ENCODE measurements at regions of chr4 and their contacts with region 1.

Region 1: GRCh38 chr4:15649914-15650545 is 5.1 kb downstream of the FBXL5 start:
- DNase-seq: peak; percentile 56
- H3K4me3 Mint-ChIP-seq: peak overlapping the region; percentile 3
- H3K27ac Mint-ChIP-seq: peak overlapping the region; percentile 57
- H3K4me1 Mint-ChIP-seq: peaks cover 50% of the 10 kb centered on the region
- H3K27me3 Mint-ChIP-seq: no peaks in the 10 kb centered on the region

Region 2: GRCh38 chr4:15479089-15479912 is 170.7 kb before region 1 on chr4:
- intact Hi-C with region 1: loop called (anchors 2 kb)
- DNase-seq: no peak
- H3K4me3 Mint-ChIP-seq: no peak overlapping the region
- H3K27ac Mint-ChIP-seq: no peak overlapping the region
- H3K4me1 Mint-ChIP-seq: no peaks in the 10 kb centered on the region
- H3K27me3 Mint-ChIP-seq: no peaks in the 10 kb centered on the region

Region 3: DNA sequence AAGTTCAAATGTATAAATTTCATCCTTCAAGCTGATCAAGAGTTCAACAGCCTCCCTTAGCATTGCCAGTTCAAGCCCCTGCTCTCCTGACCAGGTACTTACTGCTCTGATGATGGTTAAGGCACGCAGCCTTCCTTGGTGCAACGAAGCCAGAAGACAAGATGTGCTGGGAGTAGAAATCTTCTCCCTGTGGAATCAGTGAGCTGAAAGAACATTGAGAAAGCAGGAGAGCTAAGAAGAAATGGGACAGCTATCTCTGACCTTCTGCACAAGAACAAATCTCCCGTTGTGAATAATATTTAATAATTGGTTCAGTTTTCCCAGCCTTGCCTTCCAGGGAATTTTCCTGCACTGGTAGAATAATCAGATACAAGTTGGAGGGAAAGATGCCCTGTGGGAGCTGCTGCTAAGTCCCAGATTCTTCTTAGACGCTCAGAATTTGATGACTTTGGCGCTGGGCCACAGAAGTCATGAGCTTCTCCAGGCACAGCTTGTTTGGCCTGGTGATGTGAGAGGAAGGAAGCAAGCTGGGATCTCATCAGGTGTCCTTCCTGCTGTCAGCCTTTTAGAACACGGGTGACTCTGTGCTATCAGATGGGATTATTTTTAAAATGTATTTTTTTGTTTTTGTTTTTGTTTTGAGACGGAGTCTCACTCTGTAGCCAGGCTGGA is 205.9 kb after region 1 on chr4:
- intact Hi-C with region 1: no loop called
- DNase-seq: no peak
- H3K4me3 Mint-ChIP-seq: no peak overlapping the region
- H3K27ac Mint-ChIP-seq: no peak overlapping the region
- H3K4me1 Mint-ChIP-seq: no peaks in the 10 kb centered on the region
- H3K27me3 Mint-ChIP-seq: peaks cover 3% of the 10 kb centered on the region

Measured in activated T-helper 2 cell treated with anti-CD3 and anti-CD28 coated beads, Interferon-gamma antibody, Interleukin-2, Interleukin-4, amounts not matched to agents 10 μg/mL and 5 μg/mL and 100 μg/mL, durations not matched to agents 14 hours and 24 hours and 36 hours (primary cell).